ENCODE measurements at regions of chr1 and their contacts with region 1.

Region 1: GRCh38 chr1:18575620-18576019 is 55.0 kb upstream of the PAX7 start:
- DNase-seq: peak; percentile 80
- H3K4me3 Mint-ChIP-seq: no peak overlapping the region
- H3K27ac Mint-ChIP-seq: no peak overlapping the region
- H3K4me1 Mint-ChIP-seq: no peaks in the 10 kb centered on the region
- H3K27me3 Mint-ChIP-seq: peaks cover 59% of the 10 kb centered on the region
- CTCF ChIP-seq: peak; percentile 85

Region 2: GRCh38 chr1:18299441-18300338 is 275.9 kb before region 1 on chr1:
- CTCF ChIA-PET with region 1: interaction called, 7 read pairs
- intact Hi-C with region 1: loop called (anchors 10 kb)
- DNase-seq: peak; percentile 24
- H3K4me3 Mint-ChIP-seq: no peak overlapping the region
- H3K27ac Mint-ChIP-seq: no peak overlapping the region
- H3K4me1 Mint-ChIP-seq: no peaks in the 10 kb centered on the region
- H3K27me3 Mint-ChIP-seq: peaks cover 43% of the 10 kb centered on the region
- CTCF ChIP-seq: peak; percentile 71

Region 3: GRCh38 chr1:18794561-18794960 is 218.9 kb after region 1 on chr1:
- CTCF ChIA-PET with region 1: no interaction called
- intact Hi-C with region 1: no loop called
- DNase-seq: peak; percentile 4
- H3K4me3 Mint-ChIP-seq: no peak overlapping the region
- H3K27ac Mint-ChIP-seq: no peak overlapping the region
- H3K4me1 Mint-ChIP-seq: no peaks in the 10 kb centered on the region
- H3K27me3 Mint-ChIP-seq: peaks cover 100% of the 10 kb centered on the region
- CTCF ChIP-seq: no peak

Measured in Calu3 (cell line).